ENCODE measurements at regions of chr1 and their contacts with region 1.

Region 1: GRCh38 chr1:65075123-65075976 is 72.7 kb upstream of the AK4 start:
- DNase-seq: peak in 8 of 9 donors; percentile 43 to 81 (median 72)
- ATAC-seq: peak; percentile 97
- H3K4me3 ChIP-seq: no peak overlapping the region
- H3K4me3 Mint-ChIP-seq: peak overlapping the region in 1 of 10 donors; percentile 22
- H3K27ac ChIP-seq: no peak overlapping the region
- H3K27ac Mint-ChIP-seq: peak overlapping the region in 3 of 9 donors; percentile 26 to 76 (median 43)
- H3K4me1 ChIP-seq: peaks cover under 1 to 4% of the 10 kb centered on the region in 2 donors
- H3K4me1 Mint-ChIP-seq: peaks cover 6 to 34% (median 28%) of the 10 kb centered on the region in 7 donors
- H3K27me3 ChIP-seq: no peaks in the 10 kb centered on the region
- H3K27me3 Mint-ChIP-seq: peaks cover 0 to 9% (median 4%) of the 10 kb centered on the region in 5 donors

Region 2: DNA sequence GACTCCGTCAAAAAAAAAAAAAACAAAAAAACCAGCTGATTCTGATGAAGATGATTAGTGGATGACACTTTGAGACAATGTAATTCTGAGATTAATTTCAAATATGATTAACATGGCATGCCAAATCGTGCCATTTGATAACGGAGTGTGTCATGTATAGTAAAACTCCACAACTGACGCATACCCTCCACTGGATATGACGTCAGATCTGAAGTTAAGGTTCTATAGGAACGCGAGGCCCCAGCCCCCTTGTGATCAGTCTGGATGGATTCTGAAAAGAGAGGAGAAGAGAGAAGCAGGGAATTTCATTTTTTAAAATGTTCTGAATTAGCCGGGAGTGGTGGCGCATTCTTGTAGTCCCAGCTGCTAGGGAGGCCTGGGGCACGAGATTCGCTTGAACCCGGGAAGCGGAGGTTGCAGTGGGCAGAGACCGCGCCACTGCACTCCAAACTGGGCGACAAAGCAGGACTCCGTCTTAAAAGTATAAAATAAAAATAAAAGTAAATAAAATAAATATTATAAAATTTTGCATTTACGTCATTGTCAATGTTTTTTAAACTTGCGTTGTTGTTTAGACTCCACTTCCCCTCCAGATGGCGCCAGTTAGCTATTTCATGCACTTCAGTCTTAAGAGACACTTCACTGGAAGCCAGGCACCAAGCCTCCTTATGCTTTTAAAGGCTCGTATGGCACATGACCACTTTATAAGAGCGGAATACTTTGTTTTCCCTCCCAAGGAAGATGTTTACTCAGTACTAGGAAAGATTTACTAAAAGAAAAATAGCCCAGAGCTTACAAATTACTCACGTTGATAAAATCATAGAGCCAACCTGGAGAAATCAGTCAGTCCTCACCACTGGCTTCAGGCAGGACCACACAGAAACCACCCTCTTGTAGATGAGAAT is 806.4 kb before region 1 on chr1:
- CTCF ChIA-PET with region 1: interaction called, 4 read pairs
- POLR2A ChIA-PET with region 1: no interaction called
- intact Hi-C with region 1: loop called (anchors 1 to 2 kb)
- DNase-seq: peak; percentile 30 to 74 (median 62)
- ATAC-seq: peak; percentile 75
- H3K4me3 ChIP-seq: no peak overlapping the region
- H3K4me3 Mint-ChIP-seq: no peak overlapping the region
- H3K27ac ChIP-seq: no peak overlapping the region
- H3K27ac Mint-ChIP-seq: no peak overlapping the region
- H3K4me1 ChIP-seq: no peaks in the 10 kb centered on the region
- H3K4me1 Mint-ChIP-seq: no peaks in the 10 kb centered on the region
- H3K27me3 ChIP-seq: no peaks in the 10 kb centered on the region
- H3K27me3 Mint-ChIP-seq: peaks cover 3 to 18% (median 10%) of the 10 kb centered on the region in 5 donors

Region 3: GRCh38 chr1:64744492-64745180 is 330.7 kb before region 1 on chr1 and contains the start of gene RAVER2:
- CTCF ChIA-PET with region 1: no interaction called
- POLR2A ChIA-PET with region 1: no interaction called
- intact Hi-C with region 1: loop called (anchors 2 to 10 kb)
- DNase-seq: peak; percentile 41 to 60 (median 48)
- ATAC-seq: peak; percentile 84
- H3K4me3 ChIP-seq: peak within 1 kb of the TSS; percentile 55
- H3K4me3 Mint-ChIP-seq: peak within 1 kb of the TSS; percentile 80 to 98 (median 90)
- H3K27ac ChIP-seq: peak within 1 kb of the TSS; percentile 10
- H3K27ac Mint-ChIP-seq: peak within 1 kb of the TSS in 8 of 9 donors; percentile 28 to 93 (median 82)
- H3K4me1 ChIP-seq: peaks cover 5% of the 10 kb centered on the region in 2 donors
- H3K4me1 Mint-ChIP-seq: peaks cover 11 to 26% (median 16%) of the 10 kb centered on the region in 7 donors
- H3K27me3 ChIP-seq: no peaks in the 10 kb centered on the region
- H3K27me3 Mint-ChIP-seq: peaks cover 0 to 51% (median 6%) of the 10 kb centered on the region in 5 donors
- total RNA-seq, gene RAVER2: 0.29 to 1.9 (median 1.2) TPM

Region 4: DNA sequence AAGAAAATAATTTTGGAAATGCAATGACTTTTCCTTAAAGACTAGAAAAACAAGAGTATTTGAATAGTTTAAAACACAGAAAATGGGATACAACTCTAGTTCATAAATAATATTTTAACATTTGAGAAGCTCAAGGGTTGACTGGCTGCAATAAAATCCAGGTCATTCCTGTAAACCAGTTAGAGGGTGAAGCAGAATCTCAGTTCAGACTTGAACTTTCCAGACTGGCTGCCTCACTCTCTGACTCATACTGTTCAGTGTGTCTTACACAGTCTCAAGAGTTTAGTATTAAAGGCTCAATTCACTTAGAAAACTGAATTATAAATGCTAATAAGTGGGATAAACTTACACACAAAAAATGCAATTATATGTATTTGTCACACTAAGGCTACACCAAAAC is 240.6 kb before region 1 on chr1:
- CTCF ChIA-PET with region 1: interaction called, 6 read pairs
- POLR2A ChIA-PET with region 1: no interaction called
- intact Hi-C with region 1: loop called in 1 of 2 experiments (anchors 1 kb)
- DNase-seq: no peak
- ATAC-seq: no peak
- H3K4me3 ChIP-seq: no peak overlapping the region
- H3K4me3 Mint-ChIP-seq: no peak overlapping the region
- H3K27ac ChIP-seq: no peak overlapping the region
- H3K27ac Mint-ChIP-seq: peak overlapping the region in 2 of 9 donors; percentile 19 to 49
- H3K4me1 ChIP-seq: peaks cover 0 to 6% of the 10 kb centered on the region in 2 donors
- H3K4me1 Mint-ChIP-seq: peaks cover 4 to 14% (median 7%) of the 10 kb centered on the region in 7 donors
- H3K27me3 ChIP-seq: no peaks in the 10 kb centered on the region
- H3K27me3 Mint-ChIP-seq: no peaks in the 10 kb centered on the region

Region 5: DNA sequence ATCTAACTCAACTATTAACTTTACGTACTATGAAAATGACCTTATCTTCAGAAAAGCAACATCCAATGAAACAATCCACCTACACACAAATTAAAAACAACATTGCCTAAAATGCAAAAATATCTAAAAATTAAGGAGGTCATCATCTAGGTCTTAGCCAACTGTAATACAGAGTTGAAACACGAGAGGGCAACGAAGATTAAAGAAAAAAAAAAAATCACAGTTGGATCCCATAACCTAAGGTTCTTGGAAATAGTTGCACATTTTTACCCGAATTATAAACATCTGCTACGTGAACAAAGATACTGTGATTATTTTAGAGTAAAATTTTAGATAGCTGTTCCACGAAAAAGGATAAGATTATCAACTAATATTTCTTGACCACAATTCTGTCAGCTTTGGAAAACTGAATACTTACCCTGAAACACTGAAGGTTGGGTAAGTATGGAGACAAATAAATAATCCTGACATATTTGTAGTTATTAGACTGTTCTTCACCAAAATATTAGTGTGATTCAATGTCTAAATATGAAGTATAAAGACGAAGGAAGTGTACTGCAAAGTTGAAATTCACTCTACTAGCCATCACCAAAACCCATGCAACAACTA is 15.3 kb before region 1 on chr1:
- CTCF ChIA-PET with region 1: interaction called, 112 read pairs
- POLR2A ChIA-PET with region 1: interaction called, 44 read pairs
- intact Hi-C with region 1: loop called (anchors 1 kb)
- DNase-seq: peak in 3 of 9 donors; percentile 25 to 29 (median 25)
- ATAC-seq: peak; percentile 51
- H3K4me3 ChIP-seq: no peak overlapping the region
- H3K4me3 Mint-ChIP-seq: peak overlapping the region in 5 of 10 donors; percentile 8 to 54 (median 51)
- H3K27ac ChIP-seq: no peak overlapping the region
- H3K27ac Mint-ChIP-seq: peak overlapping the region in 6 of 9 donors; percentile 12 to 76 (median 34)
- H3K4me1 ChIP-seq: peaks cover 6 to 16% of the 10 kb centered on the region in 2 donors
- H3K4me1 Mint-ChIP-seq: peaks cover 21 to 87% (median 80%) of the 10 kb centered on the region in 7 donors
- H3K27me3 ChIP-seq: no peaks in the 10 kb centered on the region
- H3K27me3 Mint-ChIP-seq: no peaks in the 10 kb centered on the region

Measured in naive thymus-derived CD4-positive, alpha-beta T cell (primary cell).